ENCODE measurements at regions of chr10 and their contacts with region 1.

Region 1: DNA sequence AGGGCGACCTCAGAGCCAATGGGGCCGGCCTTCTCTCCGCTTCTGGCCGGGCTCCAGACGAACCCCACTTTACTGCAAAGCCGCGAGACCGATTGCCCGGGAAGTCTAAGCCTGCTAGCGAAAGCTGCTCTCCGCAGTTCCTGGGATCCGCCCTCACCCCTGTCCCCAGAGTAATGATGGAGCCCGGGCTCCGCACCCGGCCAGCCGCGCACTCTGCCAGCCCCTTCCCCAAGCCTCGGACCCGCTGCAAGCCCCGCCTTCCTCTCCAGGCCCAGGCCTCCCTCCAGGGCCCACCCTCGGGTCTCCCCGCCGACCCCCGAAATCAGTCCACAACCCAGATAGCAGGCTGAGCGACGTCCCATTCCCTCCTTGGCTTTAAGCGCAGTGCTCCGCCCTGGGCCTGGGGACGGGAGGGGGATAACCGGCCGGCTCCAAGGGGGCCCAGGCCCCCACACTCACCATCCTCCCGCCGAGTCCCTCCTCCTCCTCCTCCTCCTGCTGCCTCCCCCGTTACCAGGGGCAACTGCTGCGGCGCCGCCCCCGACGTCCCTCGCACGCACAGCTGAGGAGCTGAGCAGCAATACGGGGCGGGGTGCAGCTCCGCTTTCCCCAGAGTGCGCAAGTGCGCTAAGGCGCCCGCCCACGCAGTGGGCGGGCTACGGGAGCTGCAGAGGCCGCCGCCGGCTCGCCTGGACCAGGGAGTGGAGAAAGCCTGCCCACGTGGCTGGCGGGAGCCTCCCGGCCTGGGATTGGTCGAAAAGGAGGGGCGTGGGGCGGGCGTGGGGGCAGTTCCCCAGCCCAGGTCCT is at the start of gene ARL3:
- DNase-seq: peak; percentile 100
- H3K4me3 ChIP-seq: peak within 1 kb of the TSS; percentile 74
- H3K27ac ChIP-seq: peak within 1 kb of the TSS; percentile 85
- H3K4me1 ChIP-seq: peaks cover 34% of the 10 kb centered on the region
- H3K27me3 ChIP-seq: no peaks in the 10 kb centered on the region
- CTCF ChIP-seq: peak; percentile 35
- total RNA-seq, gene ARL3: 14.9 and 17.2 TPM in 2 replicates

Region 2: GRCh38 chr10:101118031-101118430 is 1596.0 kb before region 1 on chr10:
- CTCF ChIA-PET with region 1: no interaction called
- POLR2A ChIA-PET with region 1: interaction called, 26 read pairs
- intact Hi-C with region 1: no loop called
- DNase-seq: no peak
- H3K4me3 ChIP-seq: no peak overlapping the region
- H3K27ac ChIP-seq: no peak overlapping the region
- H3K4me1 ChIP-seq: no peaks in the 10 kb centered on the region
- H3K27me3 ChIP-seq: peaks cover 41% of the 10 kb centered on the region
- CTCF ChIP-seq: no peak

Region 3: GRCh38 chr10:101848894-101849351 is 865.1 kb before region 1 on chr10:
- CTCF ChIA-PET with region 1: no interaction called
- POLR2A ChIA-PET with region 1: no interaction called
- intact Hi-C with region 1: no loop called
- DNase-seq: no peak
- H3K4me3 ChIP-seq: no peak overlapping the region
- H3K27ac ChIP-seq: no peak overlapping the region
- H3K4me1 ChIP-seq: no peaks in the 10 kb centered on the region
- H3K27me3 ChIP-seq: no peaks in the 10 kb centered on the region
- CTCF ChIP-seq: no peak

Region 4: DNA sequence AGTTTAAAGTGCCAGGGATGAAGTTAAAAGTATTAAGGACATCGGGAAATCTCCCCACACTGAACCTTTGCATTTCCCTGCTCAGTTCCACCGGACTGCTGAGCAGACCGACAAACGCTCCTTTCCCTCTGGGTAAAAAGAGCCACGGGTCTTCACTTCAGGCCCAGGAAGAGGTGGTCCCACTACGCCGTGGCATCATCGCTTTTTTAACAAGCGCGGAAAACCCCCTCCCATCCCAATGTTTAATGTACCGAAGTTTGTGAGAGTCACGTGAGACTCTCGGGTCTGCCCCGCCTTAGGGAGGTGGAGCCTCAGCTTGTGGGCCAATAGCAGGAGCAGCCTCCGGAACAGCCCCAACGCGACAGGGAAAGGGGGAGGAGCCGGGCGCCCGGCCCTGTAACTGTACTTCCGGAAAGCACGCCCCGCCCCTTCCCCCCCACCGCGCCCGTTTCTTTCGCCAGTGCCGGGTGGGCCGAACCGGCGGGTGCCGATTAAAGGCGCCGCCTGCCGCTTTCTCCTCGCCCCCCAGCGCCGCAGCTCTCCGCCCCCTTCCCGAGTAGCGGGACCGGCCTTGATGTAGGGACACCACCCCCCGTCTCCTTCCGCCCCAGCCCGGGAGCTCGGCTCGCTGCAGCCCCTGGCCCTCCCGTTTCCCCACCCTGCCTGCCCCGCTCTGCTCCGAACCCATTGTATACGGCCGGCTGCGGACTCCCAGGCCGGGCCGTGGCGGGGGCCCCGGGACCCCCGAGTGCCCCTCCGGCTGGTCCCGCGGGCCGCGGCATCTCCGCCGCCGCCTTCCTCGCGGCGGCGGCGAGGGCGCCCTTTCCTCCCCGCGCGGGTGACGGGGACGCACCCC is 71.9 kb before region 1 on chr10:
- CTCF ChIA-PET with region 1: interaction called, 3 read pairs
- POLR2A ChIA-PET with region 1: no interaction called
- intact Hi-C with region 1: loop called (anchors 2 kb)
- DNase-seq: peak; percentile 98
- H3K4me3 ChIP-seq: peak overlapping the region; percentile 96
- H3K27ac ChIP-seq: peak overlapping the region; percentile 88
- H3K4me1 ChIP-seq: peaks cover 9% of the 10 kb centered on the region
- H3K27me3 ChIP-seq: no peaks in the 10 kb centered on the region
- CTCF ChIP-seq: no peak

Region 5: GRCh38 chr10:102752934-102753664 is 39.1 kb after region 1 on chr10:
- CTCF ChIA-PET with region 1: no interaction called
- POLR2A ChIA-PET with region 1: no interaction called
- intact Hi-C with region 1: no loop called
- DNase-seq: peak; percentile 67
- H3K4me3 ChIP-seq: no peak overlapping the region
- H3K27ac ChIP-seq: no peak overlapping the region
- H3K4me1 ChIP-seq: peaks cover 7% of the 10 kb centered on the region
- H3K27me3 ChIP-seq: no peaks in the 10 kb centered on the region
- CTCF ChIP-seq: peak; percentile 69